ENCODE measurements at regions of chr17 and their contacts with region 1.

Region 1: DNA sequence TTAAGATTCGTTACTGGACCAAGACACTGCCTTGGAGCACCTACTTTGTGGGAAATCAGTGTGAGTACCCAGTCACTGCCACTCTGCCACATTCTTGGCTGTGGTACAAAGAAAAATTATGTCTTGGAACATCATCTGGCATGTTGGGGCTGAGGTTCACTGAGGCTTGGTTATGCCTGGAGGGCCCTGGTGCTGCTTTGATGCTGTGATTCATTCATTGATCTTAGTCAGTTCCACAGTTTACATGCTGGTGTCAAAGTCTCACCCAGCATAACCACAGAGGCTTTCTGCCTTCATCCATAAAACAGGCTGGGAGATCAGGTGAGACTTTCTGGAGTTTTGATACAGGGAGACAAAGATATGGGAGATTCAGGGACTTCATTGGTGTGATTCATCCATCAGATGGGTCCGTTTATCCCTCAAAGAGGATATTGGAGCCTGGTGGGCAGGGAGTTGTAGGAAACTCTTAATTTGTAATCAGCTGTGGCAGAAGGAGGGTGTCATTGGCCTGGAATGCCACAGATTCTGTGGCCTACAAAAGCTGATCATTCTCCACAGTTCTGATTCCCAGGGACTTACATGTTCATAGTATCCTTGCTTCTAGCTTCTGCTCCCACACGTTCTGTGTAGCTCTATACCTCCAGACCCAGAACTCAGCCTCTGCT is 322.5 kb downstream of the PMP22 start:
- DNase-seq: peak; percentile 92
- H3K4me3 ChIP-seq: no peak overlapping the region
- H3K27ac ChIP-seq: no peak overlapping the region
- H3K4me1 ChIP-seq: peaks cover 18% of the 10 kb centered on the region
- H3K27me3 ChIP-seq: peaks cover 28% of the 10 kb centered on the region
- CTCF ChIP-seq: no peak

Region 2: DNA sequence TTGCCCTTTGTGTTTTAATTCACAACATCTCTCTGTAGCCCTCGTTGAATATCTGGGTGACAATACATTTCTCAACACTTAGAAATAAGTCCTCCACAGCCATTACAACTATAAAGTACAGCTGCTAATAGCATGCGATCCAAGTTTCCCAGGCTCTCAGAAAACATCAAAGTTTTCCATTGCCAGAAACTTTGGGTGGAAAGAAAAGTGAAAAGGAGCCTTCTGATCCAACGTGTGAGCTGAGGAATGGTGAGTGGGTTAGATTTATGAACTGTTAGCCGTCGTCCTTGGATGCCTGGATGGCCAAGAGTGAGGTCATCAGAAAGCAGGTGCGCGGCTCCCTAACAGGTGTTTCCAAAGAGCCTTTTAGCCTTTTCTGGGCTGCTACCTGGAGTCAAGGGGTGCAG is 64.5 kb after region 1 on chr17:
- CTCF ChIA-PET with region 1: no interaction called
- dilution Hi-C with region 1: loop called (anchors 5 kb)
- in situ Hi-C with region 1: no loop called
- intact Hi-C with region 1: no loop called
- DNase-seq: no peak
- H3K4me3 ChIP-seq: no peak overlapping the region
- H3K27ac ChIP-seq: no peak overlapping the region
- H3K4me1 ChIP-seq: no peaks in the 10 kb centered on the region
- H3K27me3 ChIP-seq: peaks cover 3% of the 10 kb centered on the region
- CTCF ChIP-seq: no peak

Region 3: DNA sequence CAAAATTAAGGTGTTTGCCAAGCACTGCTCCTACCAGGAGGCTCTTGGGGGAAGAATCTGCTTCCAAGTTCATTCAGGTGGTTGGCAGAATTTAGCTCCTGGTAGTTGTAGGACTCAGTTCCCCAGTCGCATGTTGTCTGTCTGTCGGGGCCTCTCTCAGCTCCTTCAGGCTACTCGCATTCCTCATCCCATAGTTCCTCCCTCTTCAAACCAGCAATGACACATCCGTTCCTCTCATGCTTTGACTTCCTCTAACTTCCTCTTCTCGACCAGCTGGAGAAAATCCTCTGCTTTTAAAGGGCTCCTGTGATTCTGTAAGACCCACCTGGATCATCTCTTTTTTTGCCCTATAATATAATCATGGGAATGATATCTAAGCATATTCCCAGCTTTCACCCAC is 214.4 kb after region 1 on chr17:
- CTCF ChIA-PET with region 1: no interaction called
- dilution Hi-C with region 1: no loop called
- in situ Hi-C with region 1: no loop called
- intact Hi-C with region 1: loop called (anchors 5 kb)
- DNase-seq: no peak
- H3K4me3 ChIP-seq: no peak overlapping the region
- H3K27ac ChIP-seq: no peak overlapping the region
- H3K4me1 ChIP-seq: no peaks in the 10 kb centered on the region
- H3K27me3 ChIP-seq: peaks cover 2% of the 10 kb centered on the region
- CTCF ChIP-seq: no peak